Sigmoid colon (tissue), 7 donors: ENCODE measurements at regions of chr16 and their contacts with region 1.

Region 1: GRCh38 chr16:31458844-31459721 is at the start of gene ARMC5:
- DNase-seq: peak; percentile 99
- H3K4me3 ChIP-seq: peak within 1 kb of the TSS; percentile 68 to 92 (median 76)
- H3K27ac ChIP-seq: peak within 1 kb of the TSS; percentile 97 to 100 (median 100)
- H3K4me1 ChIP-seq: peaks cover 0 to 52% (median 48%) of the 10 kb centered on the region in 4 donors
- H3K27me3 ChIP-seq: no peaks in the 10 kb centered on the region
- CTCF ChIP-seq: peak; percentile 33 to 60 (median 48)
- EP300 ChIP-seq: no peak
- POLR2A ChIP-seq: peak in 1 of 2 donors; percentile 52
- total RNA-seq, gene ARMC5: 3.9 to 9.5 (median 6.6) TPM

Region 2: DNA sequence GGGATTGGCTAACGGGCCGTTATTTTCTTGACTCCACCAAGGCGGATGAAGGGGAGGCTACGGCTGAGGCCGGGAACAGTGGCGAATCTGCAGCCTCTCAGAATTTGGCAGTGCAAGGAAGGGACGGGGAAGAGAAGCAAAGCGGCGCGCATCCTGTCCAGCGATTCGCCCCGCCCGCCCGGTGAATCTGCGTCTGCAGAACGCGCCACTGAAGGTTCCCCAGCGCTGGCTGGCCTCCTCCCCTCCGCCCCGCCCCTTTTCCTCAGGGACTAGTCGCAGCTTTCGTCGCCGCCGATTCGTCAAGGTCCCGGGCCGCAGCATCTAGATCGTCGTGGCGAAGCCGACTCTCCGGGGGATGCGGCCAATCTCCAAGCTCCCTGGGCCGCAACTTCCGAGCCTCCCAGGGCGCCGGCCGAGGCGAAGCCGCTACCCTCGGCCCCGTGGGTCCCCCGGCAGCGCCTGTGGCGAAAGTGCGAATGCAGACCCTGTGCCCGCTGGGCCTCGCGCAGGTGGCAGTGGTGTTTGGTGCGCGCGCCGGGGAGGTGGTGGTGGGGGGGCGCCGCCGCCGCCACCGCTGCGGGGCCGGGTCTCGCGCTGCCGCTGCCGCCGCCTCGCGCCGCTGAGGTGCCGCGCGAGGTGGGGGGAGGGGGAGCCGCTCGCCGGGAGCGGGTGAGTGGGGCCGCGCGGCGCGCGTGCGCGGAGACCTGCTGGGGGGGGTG is 501.5 kb before region 1 on chr16 and contains the start of gene SETD1A:
- intact Hi-C with region 1: loop called (anchors 10 kb)
- DNase-seq: peak; percentile 99
- H3K4me3 ChIP-seq: peak within 1 kb of the TSS; percentile 63 to 88 (median 82)
- H3K27ac ChIP-seq: peak within 1 kb of the TSS; percentile 96 to 98 (median 97)
- H3K4me1 ChIP-seq: peaks cover 0 to 39% (median 27%) of the 10 kb centered on the region in 4 donors
- H3K27me3 ChIP-seq: no peaks in the 10 kb centered on the region
- CTCF ChIP-seq: peak in 2 of 4 experiments; percentile 28 to 42
- EP300 ChIP-seq: no peak
- POLR2A ChIP-seq: peak; percentile 9 to 33
- total RNA-seq, gene SETD1A: 5.0 to 16.0 (median 7.1) TPM

Region 3: DNA sequence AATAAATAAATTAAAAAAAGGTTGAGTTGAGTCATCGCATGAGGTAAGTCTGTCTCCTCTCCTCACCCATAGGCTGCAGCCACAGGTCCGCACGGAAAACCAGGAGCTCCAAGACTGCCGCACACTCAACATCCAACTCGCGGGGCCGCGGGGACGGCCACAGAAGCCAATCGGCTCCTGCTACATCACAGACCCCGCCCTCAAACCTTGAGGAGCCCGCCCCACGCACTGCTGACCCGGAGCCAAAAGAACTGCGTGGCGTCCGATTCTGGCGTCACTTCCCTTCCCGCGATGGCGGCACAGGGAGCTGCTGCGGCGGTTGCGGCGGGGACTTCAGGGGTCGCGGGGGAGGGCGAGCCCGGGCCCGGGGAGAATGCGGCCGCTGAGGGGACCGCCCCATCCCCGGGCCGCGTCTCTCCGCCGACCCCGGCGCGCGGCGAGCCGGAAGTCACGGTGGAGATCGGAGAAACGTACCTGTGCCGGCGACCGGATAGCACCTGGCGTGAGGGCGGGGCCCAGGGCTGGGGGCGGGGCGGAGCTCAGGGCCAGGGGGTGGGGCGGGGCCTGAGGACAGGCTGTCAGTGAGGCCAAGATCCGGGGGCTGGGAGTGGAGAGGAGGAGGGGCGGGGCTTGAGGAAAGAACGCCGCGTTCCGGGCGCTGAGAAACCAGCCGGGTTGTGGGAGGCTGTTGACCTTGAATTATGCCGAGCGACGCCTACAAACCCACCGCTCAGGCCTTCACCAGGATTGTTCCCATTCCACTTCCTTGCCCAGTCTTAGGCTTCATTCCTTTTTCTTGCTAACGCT is 341.5 kb before region 1 on chr16 and contains the start of gene KAT8:
- intact Hi-C with region 1: loop called (anchors 10 kb)
- DNase-seq: peak; percentile 99
- H3K4me3 ChIP-seq: peak within 1 kb of the TSS; percentile 67 to 97 (median 90)
- H3K27ac ChIP-seq: peak within 1 kb of the TSS; percentile 92 to 98 (median 96)
- H3K4me1 ChIP-seq: peaks cover 0 to 31% (median 21%) of the 10 kb centered on the region in 4 donors
- H3K27me3 ChIP-seq: no peaks in the 10 kb centered on the region
- CTCF ChIP-seq: no peak
- EP300 ChIP-seq: peak in 3 of 4 donors; percentile 27 to 72 (median 38)
- POLR2A ChIP-seq: peak; percentile 60 to 83
- total RNA-seq, gene KAT8: 57.1 to 65.7 (median 62.5) TPM

Region 4: DNA sequence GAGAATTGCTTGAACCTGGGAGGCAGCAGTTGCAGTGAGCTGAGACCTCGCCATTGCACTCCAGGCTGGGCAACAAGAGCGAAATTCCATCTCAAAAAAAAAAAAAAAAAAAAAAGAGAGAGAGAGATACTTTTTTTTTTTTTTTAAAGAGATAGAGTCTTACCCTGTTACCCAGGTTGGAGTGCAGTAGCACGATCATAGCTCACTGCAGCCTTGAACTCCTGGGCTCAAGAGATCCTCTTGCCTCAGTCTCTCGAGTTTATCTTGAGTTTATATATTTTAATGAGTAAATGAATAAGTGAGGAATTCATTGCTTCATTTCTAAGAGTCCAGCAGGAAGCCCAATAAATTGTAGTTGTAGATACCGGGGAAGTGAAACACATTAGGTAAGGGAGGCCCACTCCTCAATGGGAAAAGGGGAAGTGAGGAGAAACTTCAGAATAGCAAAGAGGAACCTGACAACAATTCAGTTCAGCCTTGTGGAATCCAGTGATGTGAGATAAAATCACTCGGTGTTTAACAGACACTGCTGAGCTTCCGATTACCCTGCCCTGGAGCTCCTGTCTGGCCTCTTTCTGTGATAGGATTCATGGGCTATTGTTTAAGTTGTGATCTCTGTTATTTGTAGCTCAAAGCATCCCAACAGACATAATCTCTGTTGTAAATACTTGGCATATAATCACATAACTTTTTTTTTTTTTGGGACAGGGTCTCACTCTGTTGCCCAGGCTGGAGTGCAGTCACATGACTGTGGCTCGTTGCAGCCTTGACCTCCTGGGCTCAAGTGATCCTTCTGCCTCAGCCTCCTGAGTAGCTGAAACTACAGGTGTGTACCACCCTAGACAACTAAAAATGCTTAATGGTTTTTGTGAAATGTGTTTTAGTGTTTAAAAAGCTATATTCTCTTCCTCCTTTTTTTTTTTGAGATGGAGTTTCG is 215.1 kb before region 1 on chr16:
- intact Hi-C with region 1: no loop called
- DNase-seq: no peak
- H3K4me3 ChIP-seq: no peak overlapping the region
- H3K27ac ChIP-seq: no peak overlapping the region
- H3K4me1 ChIP-seq: no peaks in the 10 kb centered on the region
- H3K27me3 ChIP-seq: peaks cover 0 to 7% (median 0%) of the 10 kb centered on the region in 3 donors
- CTCF ChIP-seq: no peak
- EP300 ChIP-seq: no peak
- POLR2A ChIP-seq: no peak

Region 5: DNA sequence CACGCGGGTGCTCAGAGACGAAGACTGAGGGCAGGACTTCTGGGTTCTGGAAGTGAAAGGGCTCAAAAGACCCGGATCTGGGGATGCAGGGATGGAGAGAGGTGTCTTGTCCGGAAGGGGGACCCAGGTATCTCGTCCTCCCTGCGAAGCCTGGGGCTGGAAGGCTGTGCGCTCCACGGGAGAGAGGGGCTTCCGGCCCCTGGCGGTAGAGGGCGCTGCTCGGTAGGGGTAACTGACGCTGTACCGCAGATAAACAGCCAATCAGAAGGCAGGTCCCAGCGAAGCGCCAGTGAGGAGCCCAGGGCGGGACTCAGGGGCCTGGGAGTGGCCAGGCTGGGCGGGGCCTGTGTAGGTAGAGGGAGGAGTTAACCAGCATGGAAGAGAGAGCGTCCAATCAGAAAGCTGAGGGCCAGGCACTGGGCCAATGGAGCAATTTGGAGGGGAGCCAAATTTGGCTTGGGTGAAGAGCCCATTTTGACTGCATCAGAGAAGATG is 13.7 kb after region 1 on chr16:
- intact Hi-C with region 1: loop called (anchors 1 kb)
- DNase-seq: peak; percentile 99
- H3K4me3 ChIP-seq: peak overlapping the region; percentile 79 to 95 (median 90)
- H3K27ac ChIP-seq: peak overlapping the region; percentile 98 to 99 (median 98)
- H3K4me1 ChIP-seq: peaks cover 0 to 62% (median 59%) of the 10 kb centered on the region in 4 donors
- H3K27me3 ChIP-seq: no peaks in the 10 kb centered on the region
- CTCF ChIP-seq: peak; percentile 79 to 92 (median 86)
- EP300 ChIP-seq: no peak
- POLR2A ChIP-seq: peak in 1 of 2 donors; percentile 55

Region 6: GRCh38 chr16:31507929-31508705 is 49.0 kb after region 1 on chr16 and contains the start of gene RUSF1:
- intact Hi-C with region 1: loop called (anchors 1 kb)
- DNase-seq: peak; percentile 95
- H3K4me3 ChIP-seq: peak within 1 kb of the TSS; percentile 75 to 97 (median 92)
- H3K27ac ChIP-seq: peak within 1 kb of the TSS; percentile 92 to 97 (median 94)
- H3K4me1 ChIP-seq: peaks cover 0 to 42% (median 31%) of the 10 kb centered on the region in 4 donors
- H3K27me3 ChIP-seq: no peaks in the 10 kb centered on the region
- CTCF ChIP-seq: no peak
- EP300 ChIP-seq: peak in 1 of 4 donors; percentile 61
- POLR2A ChIP-seq: peak; percentile 91
- total RNA-seq, gene RUSF1: 31.6 to 67.0 (median 37.2) TPM